Activated naive CD8-positive, alpha-beta T cell treated with anti-CD3 and anti-CD28 coated beads, Interleukin-2, amount 10 ng/mL, durations not matched to agents 7 days and 5 days (primary cell): ENCODE measurements at regions of chr10 and their contacts with region 1.

Region 1: GRCh38 chr10:86399879-86400704 is 33.5 kb upstream of the GRID1 start:
- DNase-seq: peak; percentile 97
- ATAC-seq: peak; percentile 94
- H3K4me3 Mint-ChIP-seq: peak overlapping the region; percentile 88
- H3K27ac Mint-ChIP-seq: peak overlapping the region; percentile 88
- H3K4me1 Mint-ChIP-seq: peaks cover 13% of the 10 kb centered on the region
- H3K27me3 Mint-ChIP-seq: no peaks in the 10 kb centered on the region

Region 2: GRCh38 chr10:86411281-86411841 is 11.3 kb after region 1 on chr10:
- POLR2A ChIA-PET with region 1: interaction called, 153 read pairs
- DNase-seq: no peak
- ATAC-seq: peak; percentile 82
- H3K4me3 Mint-ChIP-seq: peak overlapping the region; percentile 74
- H3K27ac Mint-ChIP-seq: peak overlapping the region; percentile 89
- H3K4me1 Mint-ChIP-seq: peaks cover 36% of the 10 kb centered on the region
- H3K27me3 Mint-ChIP-seq: no peaks in the 10 kb centered on the region

Region 3: DNA sequence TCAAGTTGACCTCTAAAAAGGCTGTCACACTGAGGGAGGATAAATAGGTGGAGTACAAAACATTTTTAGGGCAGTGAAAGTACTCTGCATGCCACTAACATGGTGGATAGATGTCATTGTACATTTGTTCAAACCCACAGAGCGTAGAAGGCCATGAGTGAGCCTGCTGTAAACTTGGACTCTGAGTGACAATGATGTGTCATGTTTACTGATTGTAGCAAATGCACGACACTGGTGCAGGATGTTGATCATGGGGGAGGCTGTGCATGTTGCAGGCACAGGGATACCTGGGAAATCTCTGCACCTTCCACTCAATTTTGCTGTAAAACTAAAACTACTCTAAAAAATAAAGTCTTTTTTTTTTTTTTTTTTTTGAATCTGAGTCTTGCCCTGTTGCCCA is 19.0 kb after region 1 on chr10:
- POLR2A ChIA-PET with region 1: interaction called, 153 read pairs
- DNase-seq: no peak
- ATAC-seq: peak; percentile 67
- H3K4me3 Mint-ChIP-seq: no peak overlapping the region
- H3K27ac Mint-ChIP-seq: peak overlapping the region; percentile 13
- H3K4me1 Mint-ChIP-seq: peaks cover 19% of the 10 kb centered on the region
- H3K27me3 Mint-ChIP-seq: no peaks in the 10 kb centered on the region

Region 4: DNA sequence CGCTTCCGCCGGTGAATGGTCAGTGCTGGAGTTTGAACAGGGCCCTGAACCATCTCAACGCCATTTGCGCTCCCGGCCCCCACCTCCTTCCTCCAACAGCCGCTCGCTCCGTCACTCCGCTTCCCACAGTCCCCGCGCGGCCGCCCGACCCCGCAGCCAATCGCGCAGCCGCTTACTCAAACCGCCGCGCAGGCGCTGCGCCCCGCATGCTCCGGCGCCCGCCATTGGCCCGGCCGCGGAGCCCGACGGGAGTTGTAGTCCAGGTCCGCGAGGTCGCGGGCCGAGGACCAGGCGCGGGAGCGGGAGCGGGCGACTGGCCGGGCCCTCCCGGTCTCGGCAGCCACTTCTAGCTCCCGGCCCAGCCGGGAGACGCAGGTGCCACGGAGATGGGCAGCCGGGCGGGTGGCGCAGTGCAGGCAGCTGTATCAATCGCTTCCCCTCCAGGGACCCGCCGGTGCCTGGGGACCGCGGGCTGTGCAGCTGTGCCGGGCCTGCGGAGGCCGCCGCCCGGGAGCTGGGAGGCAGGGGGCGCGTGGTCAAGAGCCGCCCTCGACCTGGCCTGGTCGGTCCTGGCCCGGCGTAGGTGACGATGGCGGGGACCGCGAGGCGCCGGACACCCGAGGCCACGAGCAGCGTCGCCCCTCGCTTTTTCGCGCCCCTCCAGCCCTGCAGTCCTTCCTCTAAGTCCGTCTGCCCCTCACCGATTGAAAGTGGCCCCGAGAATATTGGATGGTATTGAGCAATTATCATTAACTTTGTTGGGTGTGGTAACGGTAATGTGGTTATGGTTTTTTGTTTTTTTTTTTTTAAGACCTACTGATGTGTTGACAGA is 121.8 kb after region 1 on chr10 and contains the start of gene WAPL:
- POLR2A ChIA-PET with region 1: interaction called, 36 read pairs
- DNase-seq: peak; percentile 98
- ATAC-seq: peak; percentile 97
- H3K4me3 Mint-ChIP-seq: peak within 1 kb of the TSS; percentile 93
- H3K27ac Mint-ChIP-seq: peak within 1 kb of the TSS; percentile 89
- H3K4me1 Mint-ChIP-seq: peaks cover 42% of the 10 kb centered on the region
- H3K27me3 Mint-ChIP-seq: no peaks in the 10 kb centered on the region
- total RNA-seq, gene WAPL: 47.9 to 52.9 TPM

Region 5: GRCh38 chr10:86585037-86585725 is 185.1 kb after region 1 on chr10:
- POLR2A ChIA-PET with region 1: interaction called, 26 read pairs
- DNase-seq: peak; percentile 82
- ATAC-seq: peak; percentile 85
- H3K4me3 Mint-ChIP-seq: no peak overlapping the region
- H3K27ac Mint-ChIP-seq: no peak overlapping the region
- H3K4me1 Mint-ChIP-seq: peaks cover 2% of the 10 kb centered on the region
- H3K27me3 Mint-ChIP-seq: peaks cover 2% of the 10 kb centered on the region